IMR-90 (cell line): ENCODE measurements at regions of chr10 and their contacts with region 1.

Region 1: GRCh38 chr10:86585037-86585725 is 63.6 kb upstream of the WAPL start:
- DNase-seq: peak; percentile 48
- ATAC-seq: peak; percentile 100
- H3K4me3 ChIP-seq: no peak overlapping the region
- H3K27ac ChIP-seq: no peak overlapping the region
- H3K4me1 ChIP-seq: no peaks in the 10 kb centered on the region
- H3K27me3 ChIP-seq: peaks cover 4% of the 10 kb centered on the region; the same call in 1 of the 2 replicates
- CTCF ChIP-seq: peak; percentile 93
- POLR2A ChIP-seq: no peak
- RAD21 ChIP-seq: peak; percentile 88

Region 2: GRCh38 chr10:86178401-86179152 is 406.6 kb before region 1 on chr10:
- CTCF ChIA-PET with region 1: no interaction called
- POLR2A ChIA-PET with region 1: no interaction called
- dilution Hi-C with region 1: no loop called
- in situ Hi-C with region 1: loop called (anchors 25 kb)
- intact Hi-C with region 1: no loop called
- DNase-seq: no peak
- ATAC-seq: no peak
- H3K4me3 ChIP-seq: no peak overlapping the region
- H3K27ac ChIP-seq: no peak overlapping the region
- H3K4me1 ChIP-seq: no peaks in the 10 kb centered on the region
- H3K27me3 ChIP-seq: no peaks in the 10 kb centered on the region
- CTCF ChIP-seq: peak; percentile 21; the same call in 1 of the 2 replicates
- POLR2A ChIP-seq: no peak
- RAD21 ChIP-seq: no peak

Region 3: GRCh38 chr10:86225103-86225782 is 359.9 kb before region 1 on chr10:
- CTCF ChIA-PET with region 1: no interaction called
- POLR2A ChIA-PET with region 1: no interaction called
- dilution Hi-C with region 1: no loop called
- in situ Hi-C with region 1: no loop called
- intact Hi-C with region 1: no loop called
- DNase-seq: peak; percentile 55
- ATAC-seq: peak; percentile 46
- H3K4me3 ChIP-seq: no peak overlapping the region
- H3K27ac ChIP-seq: no peak overlapping the region
- H3K4me1 ChIP-seq: no peaks in the 10 kb centered on the region
- H3K27me3 ChIP-seq: no peaks in the 10 kb centered on the region
- CTCF ChIP-seq: no peak
- POLR2A ChIP-seq: no peak
- RAD21 ChIP-seq: no peak

Region 4: GRCh38 chr10:86399879-86400704 is 185.1 kb before region 1 on chr10:
- CTCF ChIA-PET with region 1: interaction called, 17 read pairs
- POLR2A ChIA-PET with region 1: no interaction called
- dilution Hi-C with region 1: no loop called
- in situ Hi-C with region 1: loop called (anchors 5 kb)
- intact Hi-C with region 1: loop called (anchors 1 kb)
- DNase-seq: peak; percentile 94
- ATAC-seq: peak; percentile 95
- H3K4me3 ChIP-seq: peak overlapping the region; percentile 65
- H3K27ac ChIP-seq: peak overlapping the region; percentile 65
- H3K4me1 ChIP-seq: peaks cover 10% of the 10 kb centered on the region
- H3K27me3 ChIP-seq: peaks cover 4% of the 10 kb centered on the region; the same call in 1 of the 2 replicates
- CTCF ChIP-seq: peak; percentile 95
- POLR2A ChIP-seq: peak; percentile 26; the same call in 1 of the 2 replicates
- RAD21 ChIP-seq: peak; percentile 94

Region 5: GRCh38 chr10:86521678-86522509 is 63.3 kb before region 1 on chr10 and contains the start of gene WAPL:
- CTCF ChIA-PET with region 1: no interaction called
- POLR2A ChIA-PET with region 1: no interaction called
- dilution Hi-C with region 1: no loop called
- in situ Hi-C with region 1: no loop called
- intact Hi-C with region 1: loop called (anchors 5 kb)
- DNase-seq: peak; percentile 90
- ATAC-seq: peak; percentile 98
- H3K4me3 ChIP-seq: peak within 1 kb of the TSS; percentile 68
- H3K27ac ChIP-seq: peak within 1 kb of the TSS; percentile 81
- H3K4me1 ChIP-seq: no peaks in the 10 kb centered on the region; the same call in 1 of the 2 replicates
- H3K27me3 ChIP-seq: no peaks in the 10 kb centered on the region
- CTCF ChIP-seq: no peak
- POLR2A ChIP-seq: no peak
- RAD21 ChIP-seq: no peak
- total RNA-seq, gene WAPL: 31.7 and 49.4 TPM in 2 replicates

Region 6: DNA sequence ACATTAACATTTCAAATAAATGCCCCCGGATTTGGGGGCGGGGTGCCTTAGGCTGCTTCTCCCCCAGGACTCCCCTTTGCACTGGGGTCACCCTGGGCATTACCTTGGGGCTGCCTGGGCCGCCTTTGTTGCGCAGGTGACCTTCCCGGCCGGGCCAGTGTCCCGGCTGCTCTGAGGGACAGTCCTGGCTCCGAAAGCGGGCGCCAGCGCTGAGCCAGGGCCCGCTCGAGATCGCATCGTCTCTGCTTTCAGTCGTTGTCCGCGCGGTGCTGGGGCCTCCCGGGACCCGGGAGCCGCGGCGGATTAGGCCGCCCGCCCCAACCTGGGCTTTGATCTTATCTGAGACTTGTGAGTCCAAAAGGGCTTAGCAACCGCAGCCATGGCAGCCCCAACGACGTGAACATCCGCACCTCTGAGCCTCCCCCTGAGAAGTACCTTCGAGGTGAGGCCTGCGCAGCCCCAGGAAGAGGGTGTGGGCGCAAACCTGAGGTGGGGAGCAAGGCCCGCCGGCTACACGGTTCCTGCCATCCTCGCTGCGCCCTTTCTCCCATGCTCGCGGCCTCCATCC is 48.8 kb before region 1 on chr10:
- CTCF ChIA-PET with region 1: no interaction called
- POLR2A ChIA-PET with region 1: interaction called, 10 read pairs
- dilution Hi-C with region 1: no loop called
- in situ Hi-C with region 1: no loop called
- intact Hi-C with region 1: no loop called
- DNase-seq: no peak
- ATAC-seq: no peak
- H3K4me3 ChIP-seq: no peak overlapping the region
- H3K27ac ChIP-seq: no peak overlapping the region
- H3K4me1 ChIP-seq: peaks cover 3% of the 10 kb centered on the region; the same call in 1 of the 2 replicates
- H3K27me3 ChIP-seq: peaks cover 6% of the 10 kb centered on the region; the same call in 1 of the 2 replicates
- CTCF ChIP-seq: no peak
- POLR2A ChIP-seq: no peak
- RAD21 ChIP-seq: no peak

Region 7: GRCh38 chr10:86690657-86691084 is 105.5 kb after region 1 on chr10:
- CTCF ChIA-PET with region 1: no interaction called
- POLR2A ChIA-PET with region 1: no interaction called
- dilution Hi-C with region 1: no loop called
- in situ Hi-C with region 1: no loop called
- intact Hi-C with region 1: no loop called
- DNase-seq: no peak
- ATAC-seq: no peak
- H3K4me3 ChIP-seq: no peak overlapping the region
- H3K27ac ChIP-seq: no peak overlapping the region
- H3K4me1 ChIP-seq: peaks cover 21% of the 10 kb centered on the region
- H3K27me3 ChIP-seq: no peaks in the 10 kb centered on the region
- CTCF ChIP-seq: no peak
- POLR2A ChIP-seq: no peak
- RAD21 ChIP-seq: no peak